A549 (cell line): ENCODE measurements at regions of chr5 and their contacts with region 1.

Region 1: GRCh38 chr5:61817472-61818326 is 485.6 kb downstream of the ZSWIM6 start:
- DNase-seq: peak; percentile 36 to 64
- ATAC-seq: peak; percentile 97 to 98
- H3K4me3 ChIP-seq: no peak overlapping the region
- H3K27ac ChIP-seq: no peak overlapping the region
- H3K4me1 ChIP-seq: peaks cover 13% of the 10 kb centered on the region; the same call in 2 of the 3 replicates
- CTCF ChIP-seq: peak; percentile 79
- EP300 ChIP-seq: no peak
- POLR2A ChIP-seq: no peak
- RAD21 ChIP-seq: peak; percentile 76 to 83

Region 2: DNA sequence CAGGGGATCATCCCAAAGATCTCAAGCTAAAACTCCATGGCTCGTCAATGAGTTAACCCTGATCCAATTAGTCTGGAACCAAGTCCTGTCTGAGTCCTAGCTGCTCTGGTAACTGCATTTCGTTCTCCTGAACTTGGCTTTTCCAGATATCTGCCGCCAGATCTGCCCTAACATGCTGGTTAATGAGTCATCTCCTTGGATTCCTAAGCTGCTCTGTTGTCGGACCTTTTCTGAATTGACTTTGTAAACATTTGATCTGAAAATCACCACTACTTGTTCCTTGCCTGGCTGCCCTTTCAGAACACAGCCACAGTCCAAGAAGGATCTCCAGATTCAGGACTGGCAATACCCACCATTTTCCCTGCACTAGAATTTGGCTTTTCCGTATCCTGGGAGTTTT is 12.6 kb before region 1 on chr5:
- CTCF ChIA-PET with region 1: interaction called, 29 read pairs
- POLR2A ChIA-PET with region 1: no interaction called
- DNase-seq: peak; percentile 15 to 44
- ATAC-seq: peak in 1 of 2 experiments; percentile 72; a peak in 3 of 6 replicates
- H3K4me3 ChIP-seq: no peak overlapping the region
- H3K27ac ChIP-seq: peak overlapping the region in 1 of 2 experiments; percentile 59; a peak in 4 of 6 replicates
- H3K4me1 ChIP-seq: peaks cover 12% of the 10 kb centered on the region; the same call in 2 of the 3 replicates
- CTCF ChIP-seq: no peak
- EP300 ChIP-seq: no peak
- POLR2A ChIP-seq: no peak
- RAD21 ChIP-seq: no peak